Activated naive CD4-positive, alpha-beta T cell treated with anti-CD3 and anti-CD28 coated beads, Interleukin-2, amount 10 ng/mL, durations not matched to agents 7 days and 5 days (primary cell): ENCODE measurements at regions of chr17 and their contacts with region 1.

Region 1: GRCh38 chr17:30824356-30825145 is at the start of gene CRLF3:
- DNase-seq: peak; percentile 92
- H3K4me3 Mint-ChIP-seq: peak within 1 kb of the TSS; percentile 96
- H3K27ac Mint-ChIP-seq: peak within 1 kb of the TSS; percentile 93
- H3K4me1 Mint-ChIP-seq: peaks cover 46% of the 10 kb centered on the region
- H3K27me3 Mint-ChIP-seq: no peaks in the 10 kb centered on the region

Region 2: GRCh38 chr17:30716461-30717300 is 107.9 kb before region 1 on chr17:
- CTCF ChIA-PET with region 1: interaction called, 12 read pairs
- DNase-seq: no peak
- H3K4me3 Mint-ChIP-seq: no peak overlapping the region
- H3K27ac Mint-ChIP-seq: no peak overlapping the region
- H3K4me1 Mint-ChIP-seq: peaks cover 8% of the 10 kb centered on the region
- H3K27me3 Mint-ChIP-seq: peaks cover 22% of the 10 kb centered on the region

Region 3: GRCh38 chr17:30761058-30761457 is 63.5 kb before region 1 on chr17:
- CTCF ChIA-PET with region 1: no interaction called
- DNase-seq: no peak
- H3K4me3 Mint-ChIP-seq: no peak overlapping the region
- H3K27ac Mint-ChIP-seq: no peak overlapping the region
- H3K4me1 Mint-ChIP-seq: peaks cover 2% of the 10 kb centered on the region
- H3K27me3 Mint-ChIP-seq: no peaks in the 10 kb centered on the region

Region 4: DNA sequence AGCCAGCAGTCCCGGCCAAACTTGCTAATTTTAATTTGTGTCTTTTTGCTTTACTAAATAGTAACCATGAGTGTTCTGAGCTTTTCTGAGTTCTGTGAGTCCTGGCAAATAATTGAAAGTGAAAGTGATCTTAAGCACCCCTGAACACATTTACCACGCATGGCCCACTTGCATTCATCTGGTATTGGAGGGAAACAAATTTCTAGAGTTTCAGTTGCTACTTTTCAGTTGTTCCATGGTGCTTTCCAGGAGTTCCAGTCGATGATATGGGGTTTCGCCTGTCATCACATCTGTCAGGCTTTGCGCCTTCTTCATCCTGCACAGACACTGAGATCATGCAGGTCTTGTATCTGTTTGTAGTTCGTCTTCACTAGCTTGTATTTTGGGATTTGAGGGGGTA is 44.2 kb before region 1 on chr17:
- CTCF ChIA-PET with region 1: interaction called, 17 read pairs
- DNase-seq: peak; percentile 38
- H3K4me3 Mint-ChIP-seq: no peak overlapping the region
- H3K27ac Mint-ChIP-seq: peak overlapping the region; percentile 89
- H3K4me1 Mint-ChIP-seq: peaks cover 8% of the 10 kb centered on the region
- H3K27me3 Mint-ChIP-seq: no peaks in the 10 kb centered on the region

Region 5: GRCh38 chr17:30796016-30796415 is 28.5 kb before region 1 on chr17:
- CTCF ChIA-PET with region 1: interaction called, 10 read pairs
- DNase-seq: no peak
- H3K4me3 Mint-ChIP-seq: no peak overlapping the region
- H3K27ac Mint-ChIP-seq: no peak overlapping the region
- H3K4me1 Mint-ChIP-seq: peaks cover 4% of the 10 kb centered on the region
- H3K27me3 Mint-ChIP-seq: no peaks in the 10 kb centered on the region

Region 6: DNA sequence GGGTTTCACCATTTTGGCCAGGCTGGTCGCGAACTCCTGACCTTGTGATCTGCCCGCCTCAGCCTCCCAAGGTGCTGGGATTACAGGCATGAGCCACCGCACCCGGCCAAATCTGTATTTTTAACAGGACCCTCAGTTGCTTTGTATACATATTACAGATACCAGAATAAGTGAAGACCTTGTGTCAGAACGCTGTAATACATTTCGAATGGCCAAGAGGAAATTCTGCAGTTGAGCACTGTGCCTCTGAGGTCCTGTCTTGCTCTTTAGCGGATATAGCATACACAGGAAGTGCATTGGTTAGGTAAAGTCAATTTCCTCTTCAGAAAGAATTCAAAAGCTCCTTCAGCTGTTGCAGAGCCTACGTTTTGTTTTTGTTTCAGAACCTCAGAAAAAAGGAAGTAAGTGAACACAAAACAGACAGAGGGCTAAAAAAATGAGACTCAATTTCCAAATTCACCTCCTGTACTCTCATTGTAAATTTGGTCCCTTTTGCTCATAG is 15.7 kb before region 1 on chr17:
- CTCF ChIA-PET with region 1: interaction called, 211 read pairs
- DNase-seq: peak; percentile 62
- H3K4me3 Mint-ChIP-seq: peak overlapping the region; percentile 86
- H3K27ac Mint-ChIP-seq: peak overlapping the region; percentile 100
- H3K4me1 Mint-ChIP-seq: peaks cover 73% of the 10 kb centered on the region
- H3K27me3 Mint-ChIP-seq: no peaks in the 10 kb centered on the region

Region 7: DNA sequence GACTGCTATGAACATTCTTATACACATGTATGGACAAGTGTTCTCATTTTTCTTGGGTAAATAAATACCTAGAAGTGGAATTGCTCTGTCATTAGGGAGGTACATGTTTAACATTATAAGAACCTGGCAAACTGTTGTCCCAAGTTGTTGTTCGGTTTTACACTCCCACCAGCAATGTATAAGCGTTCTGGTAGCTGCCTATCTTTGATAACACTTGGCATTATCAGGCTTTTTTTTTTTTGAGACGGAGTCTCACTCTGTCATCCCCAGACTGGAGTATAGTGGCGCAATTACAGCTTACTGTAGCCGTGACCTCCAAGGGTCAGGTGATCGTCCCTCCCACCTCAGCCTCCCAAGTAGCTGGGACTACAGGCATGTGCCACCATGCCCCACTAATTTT is 23.5 kb after region 1 on chr17:
- CTCF ChIA-PET with region 1: no interaction called
- DNase-seq: no peak
- H3K4me3 Mint-ChIP-seq: no peak overlapping the region
- H3K27ac Mint-ChIP-seq: no peak overlapping the region
- H3K4me1 Mint-ChIP-seq: no peaks in the 10 kb centered on the region
- H3K27me3 Mint-ChIP-seq: no peaks in the 10 kb centered on the region